ENCODE measurements at regions of chr3 and their contacts with region 1.

Region 1: GRCh38 chr3:16550676-16551341 is 37.3 kb upstream of the RFTN1 start:
- DNase-seq: peak in 3 of 5 donors; percentile 53 to 68 (median 58)
- ATAC-seq: peak; percentile 66 to 88 (median 79)
- H3K4me3 ChIP-seq: peak overlapping the region in 7 of 12 donors; percentile 9 to 34 (median 26)
- H3K27ac ChIP-seq: peak overlapping the region in 6 of 12 donors; percentile 4 to 49 (median 36)
- H3K4me1 ChIP-seq: peaks cover 0 to 26% (median 5%) of the 10 kb centered on the region in 12 donors
- H3K27me3 ChIP-seq: no peaks in the 10 kb centered on the region
- CTCF ChIP-seq: peak; percentile 85 to 93 (median 90)
- POLR2A ChIP-seq: no peak

Region 2: GRCh38 chr3:15815696-15816095 is 735.1 kb before region 1 on chr3:
- intact Hi-C with region 1: loop called in 1 of 10 experiments (anchors 10 kb)
- DNase-seq: no peak
- ATAC-seq: peak in 2 of 4 donors; percentile 57 to 59
- H3K4me3 ChIP-seq: no peak overlapping the region
- H3K27ac ChIP-seq: no peak overlapping the region
- H3K4me1 ChIP-seq: peaks cover 0 to 16% (median 4%) of the 10 kb centered on the region in 12 donors
- H3K27me3 ChIP-seq: no peaks in the 10 kb centered on the region
- CTCF ChIP-seq: peak; percentile 25 to 70 (median 52)
- POLR2A ChIP-seq: no peak

Region 3: DNA sequence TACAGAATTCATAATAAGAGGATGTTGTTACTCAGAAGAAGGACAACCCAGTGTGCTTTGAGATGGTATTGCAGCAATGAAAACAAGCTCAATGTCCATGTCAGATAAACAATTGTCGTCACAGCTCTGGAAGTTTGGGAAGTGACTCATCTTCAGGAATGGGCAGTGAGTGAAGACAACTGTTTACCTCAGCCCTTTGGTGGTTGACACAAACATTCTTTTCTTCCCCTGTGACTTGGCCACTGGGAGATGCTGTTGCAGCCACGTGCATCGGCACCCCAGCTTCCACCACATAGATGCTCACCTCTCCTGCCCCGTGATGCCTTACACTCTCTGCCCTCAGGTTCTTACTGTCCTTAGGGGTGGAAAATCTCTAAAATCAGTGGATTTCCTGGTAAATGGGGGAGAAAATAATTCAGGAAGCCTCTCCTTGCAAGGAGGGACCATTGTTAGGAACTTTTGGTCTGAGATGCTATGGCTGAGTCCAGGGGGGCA is 490.4 kb before region 1 on chr3:
- intact Hi-C with region 1: loop called in 1 of 10 experiments (anchors 10 kb)
- DNase-seq: peak in 1 of 5 donors; percentile 57
- ATAC-seq: peak; percentile 53 to 92 (median 86)
- H3K4me3 ChIP-seq: no peak overlapping the region
- H3K27ac ChIP-seq: peak overlapping the region in 10 of 12 donors; percentile 6 to 86 (median 74)
- H3K4me1 ChIP-seq: peaks cover 0 to 42% (median 28%) of the 10 kb centered on the region in 12 donors
- H3K27me3 ChIP-seq: no peaks in the 10 kb centered on the region
- CTCF ChIP-seq: peak in 2 of 12 donors; percentile 6 to 11
- POLR2A ChIP-seq: no peak

Region 4: GRCh38 chr3:16177962-16178627 is 372.7 kb before region 1 on chr3:
- intact Hi-C with region 1: no loop called
- DNase-seq: peak; percentile 78 to 92 (median 84)
- ATAC-seq: peak; percentile 45 to 78 (median 76)
- H3K4me3 ChIP-seq: peak overlapping the region in 10 of 12 donors; percentile 3 to 56 (median 35)
- H3K27ac ChIP-seq: peak overlapping the region in 2 of 12 donors; percentile 46 to 50
- H3K4me1 ChIP-seq: peaks cover 0 to 49% (median 29%) of the 10 kb centered on the region in 12 donors
- H3K27me3 ChIP-seq: no peaks in the 10 kb centered on the region
- CTCF ChIP-seq: peak; percentile 94 to 99 (median 96)
- POLR2A ChIP-seq: peak in 1 of 2 donors; percentile 50

Region 5: DNA sequence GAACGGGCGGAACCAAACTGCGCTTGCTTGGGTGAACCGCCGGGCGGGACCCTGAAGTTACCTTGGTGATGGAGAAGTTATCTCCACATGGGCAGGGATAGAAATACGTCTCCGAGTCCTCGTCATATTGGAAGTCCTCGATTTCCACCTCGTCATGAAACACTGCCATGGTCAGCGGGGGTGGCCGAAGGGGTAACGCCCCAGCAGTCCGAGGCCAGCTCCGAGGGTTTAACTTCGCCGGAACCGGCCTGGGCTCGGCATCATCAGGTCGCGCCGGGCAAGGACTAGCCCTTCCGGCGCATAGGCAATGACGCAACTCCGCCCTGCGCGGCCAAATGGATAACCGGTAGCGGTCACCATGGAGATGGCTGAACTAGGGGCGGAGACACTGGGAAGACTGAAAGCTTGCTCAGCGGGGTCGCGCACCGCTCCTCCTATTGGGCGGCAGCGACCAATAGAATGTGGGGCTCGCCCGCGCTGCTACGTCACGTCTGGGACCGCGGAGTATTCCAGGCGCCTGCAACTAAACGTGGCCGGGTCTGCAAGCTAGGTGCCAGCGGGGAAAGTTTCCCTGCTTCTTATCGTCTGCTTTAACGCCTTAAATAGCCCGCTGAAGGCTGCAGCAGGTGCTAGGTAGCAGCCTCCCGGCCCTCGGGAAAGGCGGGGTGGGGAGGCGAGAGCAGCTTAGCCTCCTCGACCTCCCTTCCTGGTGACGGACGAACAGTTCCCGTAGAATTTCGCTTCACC is 285.9 kb before region 1 on chr3 and contains the starts of genes DPH3 and OXNAD1:
- intact Hi-C with region 1: loop called in 8 of 10 experiments (anchors 1 to 5 kb)
- DNase-seq: peak; percentile 100
- ATAC-seq: peak; percentile 99
- H3K4me3 ChIP-seq: peak within 1 kb of the TSS; percentile 49 to 97 (median 75)
- H3K27ac ChIP-seq: peak within 1 kb of the TSS; percentile 37 to 97 (median 85)
- H3K4me1 ChIP-seq: peaks cover 3 to 59% (median 44%) of the 10 kb centered on the region in 12 donors
- H3K27me3 ChIP-seq: no peaks in the 10 kb centered on the region
- CTCF ChIP-seq: peak in 3 of 12 donors; percentile 8 to 17 (median 16)
- POLR2A ChIP-seq: peak; percentile 47 to 74
- total RNA-seq, gene DPH3: 13.7 to 35.6 (median 20.9) TPM
- total RNA-seq, gene OXNAD1: 12.8 to 23.6 (median 18.1) TPM

Region 6: GRCh38 chr3:16290007-16290826 is 260.6 kb before region 1 on chr3:
- intact Hi-C with region 1: loop called (anchors 1 to 5 kb)
- DNase-seq: peak in 4 of 5 donors; percentile 32 to 51 (median 42)
- ATAC-seq: peak in 1 of 4 donors; percentile 30
- H3K4me3 ChIP-seq: peak overlapping the region in 1 of 12 donors; percentile 2
- H3K27ac ChIP-seq: peak overlapping the region in 10 of 12 donors; percentile 12 to 88 (median 62)
- H3K4me1 ChIP-seq: peaks cover 3 to 75% (median 53%) of the 10 kb centered on the region in 12 donors
- H3K27me3 ChIP-seq: no peaks in the 10 kb centered on the region
- CTCF ChIP-seq: peak; percentile 49 to 92 (median 86)
- POLR2A ChIP-seq: no peak

Region 7: GRCh38 chr3:16357186-16358147 is 193.3 kb before region 1 on chr3:
- intact Hi-C with region 1: loop called in 1 of 10 experiments (anchors 5 kb)
- DNase-seq: peak in 3 of 5 donors; percentile 43 to 62 (median 52)
- ATAC-seq: peak; percentile 29 to 87 (median 46)
- H3K4me3 ChIP-seq: no peak overlapping the region
- H3K27ac ChIP-seq: peak overlapping the region in 7 of 12 donors; percentile 14 to 71 (median 40)
- H3K4me1 ChIP-seq: peaks cover 0 to 55% (median 19%) of the 10 kb centered on the region in 12 donors
- H3K27me3 ChIP-seq: no peaks in the 10 kb centered on the region
- CTCF ChIP-seq: no peak
- POLR2A ChIP-seq: no peak

Region 8: GRCh38 chr3:16600780-16601539 is 50.2 kb after region 1 on chr3:
- intact Hi-C with region 1: no loop called
- DNase-seq: peak; percentile 73 to 85 (median 80)
- ATAC-seq: peak; percentile 48 to 76 (median 68)
- H3K4me3 ChIP-seq: peak overlapping the region in 3 of 12 donors; percentile 0 to 19 (median 14)
- H3K27ac ChIP-seq: no peak overlapping the region
- H3K4me1 ChIP-seq: peaks cover 0 to 7% (median 0%) of the 10 kb centered on the region in 12 donors
- H3K27me3 ChIP-seq: no peaks in the 10 kb centered on the region
- CTCF ChIP-seq: peak; percentile 73 to 96 (median 89)
- POLR2A ChIP-seq: no peak

Region 9: GRCh38 chr3:16741103-16741758 is 190.4 kb after region 1 on chr3:
- intact Hi-C with region 1: no loop called
- DNase-seq: no peak
- ATAC-seq: peak in 1 of 4 donors; percentile 46
- H3K4me3 ChIP-seq: peak overlapping the region in 1 of 12 donors; percentile 20
- H3K27ac ChIP-seq: peak overlapping the region in 11 of 12 donors; percentile 29 to 87 (median 64)
- H3K4me1 ChIP-seq: peaks cover 0 to 16% (median 0%) of the 10 kb centered on the region in 12 donors
- H3K27me3 ChIP-seq: no peaks in the 10 kb centered on the region
- CTCF ChIP-seq: no peak
- POLR2A ChIP-seq: no peak

Region 10: DNA sequence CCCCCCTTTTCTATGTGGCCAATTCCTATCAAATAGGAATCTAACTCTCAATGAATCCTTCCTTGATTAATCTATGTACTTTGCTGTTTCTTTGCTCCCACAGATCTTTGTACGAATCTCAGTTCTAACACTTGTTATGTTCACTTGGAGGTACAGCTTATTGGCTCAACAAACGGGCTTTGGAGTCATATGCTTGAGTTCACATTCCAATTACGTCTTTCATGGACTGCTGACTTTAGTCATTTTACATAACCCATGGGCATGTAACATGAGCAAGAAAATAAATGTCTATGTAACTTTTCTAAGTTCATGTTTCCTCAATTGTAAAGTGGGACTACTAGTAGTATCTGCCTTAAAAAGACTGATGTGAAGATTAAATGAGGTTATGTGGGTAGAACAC is 1314.8 kb after region 1 on chr3:
- intact Hi-C with region 1: no loop called
- DNase-seq: no peak
- ATAC-seq: no peak
- H3K4me3 ChIP-seq: no peak overlapping the region
- H3K27ac ChIP-seq: no peak overlapping the region
- H3K4me1 ChIP-seq: no peaks in the 10 kb centered on the region
- H3K27me3 ChIP-seq: no peaks in the 10 kb centered on the region
- CTCF ChIP-seq: no peak
- POLR2A ChIP-seq: no peak

Measured in heart left ventricle (tissue), 16 donors.